Left cardiac atrium (tissue), 4 donors: ENCODE measurements at regions of chr6 and their contacts with region 1.

Region 1: GRCh38 chr6:1761477-1761877 is 151.8 kb downstream of the FOXC1 start:
- DNase-seq: no peak
- ATAC-seq: no peak

Region 2: GRCh38 chr6:1720620-1721322 is 40.7 kb before region 1 on chr6:
- intact Hi-C with region 1: loop called in 1 of 2 experiments (anchors 2 kb)
- DNase-seq: no peak
- ATAC-seq: no peak